ENCODE measurements at regions of chr3 and their contacts with region 1.

Region 1: DNA sequence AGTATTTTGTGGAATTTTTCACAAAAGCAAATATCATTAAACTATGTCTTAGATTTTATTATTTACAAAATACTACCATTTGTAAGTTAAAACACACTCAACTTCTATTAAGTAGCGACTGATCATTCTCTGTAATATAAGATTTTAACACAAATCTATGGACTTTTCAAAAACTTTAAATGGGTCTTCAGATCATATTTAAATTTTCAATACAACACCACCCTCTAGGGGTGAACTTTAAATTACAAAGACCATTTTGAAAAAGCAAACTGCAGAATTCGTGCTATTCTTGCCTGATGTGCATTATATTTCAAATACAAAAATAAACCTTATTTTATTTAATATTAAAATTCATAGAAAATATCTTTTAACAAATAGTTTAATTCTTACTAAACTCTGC is 8.2 kb upstream of the VGLL4 start:
- DNase-seq: no peak
- H3K4me3 ChIP-seq: no peak overlapping the region
- H3K27ac ChIP-seq: no peak overlapping the region
- H3K4me1 ChIP-seq: peaks cover 0 to 6% (median 0%) of the 10 kb centered on the region in 3 donors
- H3K27me3 ChIP-seq: no peaks in the 10 kb centered on the region
- CTCF ChIP-seq: peak in 4 of 6 experiments; percentile 53 to 67 (median 59)
- POLR2A ChIP-seq: no peak

Region 2: DNA sequence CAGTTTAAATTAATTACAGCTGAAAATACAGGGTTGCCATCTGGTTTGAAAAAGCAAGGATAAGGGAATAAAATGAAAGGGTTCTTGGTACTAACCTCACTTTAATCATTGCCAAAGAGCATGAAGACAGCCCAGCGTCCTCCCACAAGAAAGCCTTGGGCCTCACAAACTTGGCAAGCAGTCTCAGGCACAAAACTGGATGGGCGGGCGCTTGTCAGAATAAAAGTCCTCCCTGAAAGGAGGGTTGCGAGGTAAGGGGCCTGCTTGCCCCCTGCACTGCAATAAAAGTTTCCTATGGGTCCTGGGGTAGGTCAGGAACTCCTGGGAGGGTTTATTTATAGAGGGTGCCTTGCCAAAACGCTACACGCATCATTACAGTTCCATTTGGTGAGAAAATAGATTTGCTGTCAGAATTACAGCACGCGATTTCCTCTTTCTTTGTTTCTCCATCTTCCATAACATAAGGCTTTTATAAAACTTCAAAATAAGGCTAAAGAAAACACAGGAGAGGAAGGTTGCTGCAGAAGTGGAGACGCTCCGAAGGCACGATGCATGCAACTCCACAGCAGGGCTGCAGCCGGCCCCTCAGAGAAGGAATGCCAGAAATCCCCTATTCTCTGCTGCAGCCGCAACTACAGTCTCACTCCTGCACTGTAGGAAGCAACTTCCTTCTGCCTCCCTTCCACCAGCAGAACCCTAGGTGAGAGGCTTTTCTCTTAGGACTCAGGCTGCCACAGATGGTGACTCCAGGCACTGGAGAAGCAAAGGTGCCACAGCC is 69.5 kb before region 1 on chr3:
- intact Hi-C with region 1: no loop called
- DNase-seq: no peak
- H3K4me3 ChIP-seq: peak overlapping the region in 3 of 4 donors; percentile 35 to 53 (median 35)
- H3K27ac ChIP-seq: peak overlapping the region; percentile 39 to 83 (median 75)
- H3K4me1 ChIP-seq: peaks cover 18 to 78% (median 28%) of the 10 kb centered on the region in 3 donors
- H3K27me3 ChIP-seq: no peaks in the 10 kb centered on the region
- CTCF ChIP-seq: no peak
- POLR2A ChIP-seq: no peak

Region 3: GRCh38 chr3:11835028-11835639 is 183.2 kb after region 1 on chr3:
- intact Hi-C with region 1: loop called (anchors 10 kb)
- DNase-seq: no peak
- H3K4me3 ChIP-seq: no peak overlapping the region
- H3K27ac ChIP-seq: no peak overlapping the region
- H3K4me1 ChIP-seq: peaks cover 0 to 18% (median 3%) of the 10 kb centered on the region in 3 donors
- H3K27me3 ChIP-seq: no peaks in the 10 kb centered on the region
- CTCF ChIP-seq: peak in 5 of 6 experiments; percentile 18 to 66 (median 36)
- POLR2A ChIP-seq: no peak